CD8-positive, alpha-beta T cell (primary cell): ENCODE measurements at regions of chr1 and their contacts with region 1.

Region 1: GRCh38 chr1:9867408-9868243 is 42.4 kb downstream of the CTNNBIP1 start:
- DNase-seq: peak; percentile 76 to 95 (median 88)
- ATAC-seq: peak; percentile 99
- H3K4me3 ChIP-seq: no peak overlapping the region
- H3K4me3 Mint-ChIP-seq: no peak overlapping the region
- H3K27ac ChIP-seq: no peak overlapping the region
- H3K27ac Mint-ChIP-seq: no peak overlapping the region
- H3K4me1 ChIP-seq: no peaks in the 10 kb centered on the region
- H3K4me1 Mint-ChIP-seq: no peaks in the 10 kb centered on the region
- H3K27me3 ChIP-seq: no peaks in the 10 kb centered on the region
- H3K27me3 Mint-ChIP-seq: no peaks in the 10 kb centered on the region
- CTCF ChIP-seq: peak; percentile 91

Region 2: GRCh38 chr1:9181176-9181906 is 686.3 kb before region 1 on chr1:
- CTCF ChIA-PET with region 1: no interaction called
- POLR2A ChIA-PET with region 1: no interaction called
- intact Hi-C with region 1: no loop called
- DNase-seq: peak; percentile 40 to 79 (median 64)
- ATAC-seq: peak; percentile 72
- H3K4me3 ChIP-seq: peak overlapping the region in 1 of 2 experiments; percentile 39
- H3K4me3 Mint-ChIP-seq: peak overlapping the region; percentile 69
- H3K27ac ChIP-seq: no peak overlapping the region
- H3K27ac Mint-ChIP-seq: no peak overlapping the region
- H3K4me1 ChIP-seq: peaks cover 9% of the 10 kb centered on the region
- H3K4me1 Mint-ChIP-seq: peaks cover 9% of the 10 kb centered on the region
- H3K27me3 ChIP-seq: peaks cover 0 to 5% of the 10 kb centered on the region in 2 experiments
- H3K27me3 Mint-ChIP-seq: peaks cover 38% of the 10 kb centered on the region
- CTCF ChIP-seq: peak; percentile 91

Region 3: GRCh38 chr1:9615316-9616063 is 252.1 kb before region 1 on chr1:
- CTCF ChIA-PET with region 1: interaction called, 58 read pairs
- POLR2A ChIA-PET with region 1: no interaction called
- intact Hi-C with region 1: no loop called
- DNase-seq: peak; percentile 28 to 77 (median 58)
- ATAC-seq: peak; percentile 95
- H3K4me3 ChIP-seq: no peak overlapping the region
- H3K4me3 Mint-ChIP-seq: no peak overlapping the region
- H3K27ac ChIP-seq: no peak overlapping the region
- H3K27ac Mint-ChIP-seq: no peak overlapping the region
- H3K4me1 ChIP-seq: no peaks in the 10 kb centered on the region
- H3K4me1 Mint-ChIP-seq: peaks cover 2% of the 10 kb centered on the region
- H3K27me3 ChIP-seq: peaks cover 0 to 3% of the 10 kb centered on the region in 2 experiments
- H3K27me3 Mint-ChIP-seq: peaks cover 7% of the 10 kb centered on the region
- CTCF ChIP-seq: peak; percentile 70

Region 4: DNA sequence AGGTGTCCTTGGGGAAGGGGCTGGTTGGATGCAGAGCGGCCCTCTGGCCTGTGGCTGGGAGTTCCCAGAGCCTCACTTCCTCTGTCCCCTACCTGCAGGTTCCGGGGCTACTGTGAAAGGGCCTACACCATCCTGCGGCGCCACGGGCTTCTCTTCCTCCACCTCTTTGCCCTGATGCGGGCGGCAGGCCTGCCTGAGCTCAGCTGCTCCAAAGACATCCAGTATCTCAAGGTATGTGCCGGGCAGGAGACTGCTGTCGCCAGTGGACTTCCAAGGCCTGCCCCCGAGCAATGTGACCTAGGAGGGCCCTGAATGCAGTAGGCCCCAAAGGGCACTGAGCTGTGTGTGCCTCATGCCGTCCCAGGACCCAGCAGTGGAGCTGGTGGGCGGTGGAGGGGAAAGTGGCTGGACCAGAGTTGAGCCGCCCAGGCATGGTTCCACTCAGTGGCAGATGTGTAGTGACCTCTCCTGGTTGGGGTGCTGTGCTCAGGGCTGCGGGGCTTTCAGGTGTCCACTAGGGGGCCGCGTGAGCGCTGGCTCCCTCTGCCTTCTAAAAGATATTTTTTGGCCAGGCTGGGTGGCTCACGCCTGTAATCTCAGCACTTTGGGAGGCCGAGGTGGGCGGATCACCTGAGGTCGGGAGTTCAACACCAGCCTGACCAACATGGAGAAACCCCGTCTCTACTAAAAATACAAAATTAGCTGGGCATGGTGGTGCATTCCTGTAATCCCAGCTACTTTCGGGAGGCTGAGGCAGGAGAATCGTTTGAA is 142.7 kb before region 1 on chr1:
- CTCF ChIA-PET with region 1: interaction called, 19 read pairs
- POLR2A ChIA-PET with region 1: no interaction called
- intact Hi-C with region 1: loop called (anchors 1 to 2 kb)
- DNase-seq: peak; percentile 47 to 84 (median 75)
- ATAC-seq: peak; percentile 47
- H3K4me3 ChIP-seq: no peak overlapping the region
- H3K4me3 Mint-ChIP-seq: peak overlapping the region; percentile 8
- H3K27ac ChIP-seq: peak overlapping the region in 1 of 2 experiments; percentile 16
- H3K27ac Mint-ChIP-seq: peak overlapping the region; percentile 80
- H3K4me1 ChIP-seq: peaks cover 82% of the 10 kb centered on the region
- H3K4me1 Mint-ChIP-seq: peaks cover 71% of the 10 kb centered on the region
- H3K27me3 ChIP-seq: no peaks in the 10 kb centered on the region
- H3K27me3 Mint-ChIP-seq: no peaks in the 10 kb centered on the region
- CTCF ChIP-seq: peak; percentile 97

Region 5: DNA sequence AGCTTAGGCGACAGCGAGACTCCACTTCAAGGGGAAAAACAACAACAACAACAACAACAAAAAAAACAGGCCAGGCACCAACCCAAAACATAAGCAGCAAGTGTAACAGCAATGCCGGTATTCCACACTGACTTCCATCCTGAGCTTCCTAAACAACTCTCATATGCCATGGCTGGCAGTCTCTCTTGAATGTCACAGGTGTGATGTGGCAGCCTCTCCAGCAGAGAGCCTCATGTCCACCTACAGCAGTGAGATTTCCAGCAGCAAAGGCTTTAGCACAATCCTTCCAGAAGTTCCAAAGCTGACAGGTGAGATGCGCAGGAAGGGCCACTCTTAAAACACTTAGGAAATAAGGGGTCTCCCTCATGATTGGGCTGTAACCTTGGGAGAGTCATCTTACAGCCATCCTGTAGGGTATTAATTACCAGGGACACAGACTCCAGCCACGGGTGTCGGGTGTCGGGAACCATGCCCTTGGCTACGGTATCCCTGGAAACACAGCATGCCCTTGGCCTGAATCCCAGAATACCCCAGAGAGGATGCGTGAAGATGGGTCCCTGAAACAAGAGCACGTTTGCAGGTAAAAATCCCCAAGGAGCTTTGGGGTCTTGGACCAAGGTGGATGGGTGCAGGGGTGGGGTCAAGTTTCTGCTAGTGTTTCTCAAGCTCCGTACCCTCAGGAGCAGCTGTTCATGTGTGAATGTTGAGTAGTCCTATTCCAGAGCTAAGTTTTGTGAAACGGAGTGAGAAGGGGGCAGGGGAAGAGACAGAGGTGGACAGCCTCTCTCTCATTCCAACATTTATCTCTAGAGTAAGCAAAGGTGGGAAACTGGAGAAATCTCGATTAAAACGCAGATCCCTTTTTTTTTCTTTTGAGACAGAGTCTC is 75.2 kb before region 1 on chr1:
- CTCF ChIA-PET with region 1: interaction called, 361 read pairs
- POLR2A ChIA-PET with region 1: interaction called, 3 read pairs
- intact Hi-C with region 1: no loop called
- DNase-seq: no peak
- ATAC-seq: no peak
- H3K4me3 ChIP-seq: no peak overlapping the region
- H3K4me3 Mint-ChIP-seq: no peak overlapping the region
- H3K27ac ChIP-seq: no peak overlapping the region
- H3K27ac Mint-ChIP-seq: peak overlapping the region; percentile 4
- H3K4me1 ChIP-seq: peaks cover 8% of the 10 kb centered on the region
- H3K4me1 Mint-ChIP-seq: peaks cover 46% of the 10 kb centered on the region
- H3K27me3 ChIP-seq: no peaks in the 10 kb centered on the region
- H3K27me3 Mint-ChIP-seq: no peaks in the 10 kb centered on the region
- CTCF ChIP-seq: no peak

Region 6: GRCh38 chr1:9823943-9824701 is 43.5 kb before region 1 on chr1 and contains the start of gene CLSTN1:
- CTCF ChIA-PET with region 1: interaction called, 3 read pairs
- POLR2A ChIA-PET with region 1: no interaction called
- intact Hi-C with region 1: loop called (anchors 5 kb)
- DNase-seq: peak; percentile 76 to 93 (median 91)
- ATAC-seq: peak; percentile 72
- H3K4me3 ChIP-seq: peak within 1 kb of the TSS; percentile 58 to 72
- H3K4me3 Mint-ChIP-seq: peak within 1 kb of the TSS; percentile 96
- H3K27ac ChIP-seq: peak within 1 kb of the TSS; percentile 37 to 76
- H3K27ac Mint-ChIP-seq: peak within 1 kb of the TSS; percentile 89
- H3K4me1 ChIP-seq: peaks cover 36% of the 10 kb centered on the region
- H3K4me1 Mint-ChIP-seq: peaks cover 43% of the 10 kb centered on the region
- H3K27me3 ChIP-seq: no peaks in the 10 kb centered on the region
- H3K27me3 Mint-ChIP-seq: no peaks in the 10 kb centered on the region
- CTCF ChIP-seq: no peak
- total RNA-seq, gene CLSTN1: 50.0 to 51.1 TPM